CD4-positive, alpha-beta T cell (primary cell): ENCODE measurements at regions of chr17 and their contacts with region 1.

Region 1: GRCh38 chr17:40531051-40531991 is 29.9 kb upstream of the TNS4 start:
- DNase-seq: peak in 13 of 14 experiments; percentile 51 to 84 (median 72)
- ATAC-seq: no peak
- H3K4me3 ChIP-seq: no peak overlapping the region
- H3K4me3 Mint-ChIP-seq: peak overlapping the region; percentile 8
- H3K27ac ChIP-seq: no peak overlapping the region
- H3K27ac Mint-ChIP-seq: peak overlapping the region; percentile 98
- H3K4me1 ChIP-seq: peaks cover 71% of the 10 kb centered on the region
- H3K4me1 Mint-ChIP-seq: peaks cover 72% of the 10 kb centered on the region
- H3K27me3 ChIP-seq: no peaks in the 10 kb centered on the region
- H3K27me3 Mint-ChIP-seq: peaks cover 5% of the 10 kb centered on the region
- CTCF ChIP-seq: no peak

Region 2: DNA sequence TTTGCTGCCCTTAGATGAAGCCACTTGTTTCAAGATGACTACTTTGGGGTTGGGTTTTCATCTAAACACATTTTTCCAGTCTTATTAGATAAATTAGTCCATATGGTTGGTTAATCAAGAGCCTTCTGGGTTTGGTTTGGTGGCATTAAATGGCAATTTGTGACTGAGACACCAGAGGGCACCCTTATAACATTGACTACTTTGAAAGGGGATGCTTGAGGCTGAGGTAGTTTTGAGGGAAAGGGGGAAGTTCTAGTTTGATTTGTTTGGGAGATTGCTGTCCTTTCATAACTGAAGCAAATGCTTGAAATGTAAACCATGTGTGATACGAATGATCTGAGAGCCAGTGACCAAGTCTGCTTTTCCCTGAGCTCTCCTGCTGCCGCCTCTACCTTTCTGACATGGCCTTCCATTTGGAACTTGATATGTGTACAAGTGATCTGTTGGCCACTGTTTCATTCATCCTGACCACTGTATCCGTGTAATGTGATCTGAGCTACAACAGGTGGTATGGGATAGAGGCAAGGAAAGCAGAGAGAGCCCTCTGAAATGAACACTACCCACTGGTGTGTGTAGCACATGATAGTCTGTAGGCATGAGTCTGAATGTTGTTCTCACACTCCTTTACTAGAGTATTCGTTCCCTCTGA is 228.2 kb before region 1 on chr17:
- CTCF ChIA-PET with region 1: interaction called, 4 read pairs
- POLR2A ChIA-PET with region 1: interaction called, 4 read pairs
- intact Hi-C with region 1: loop called in 1 of 2 experiments (anchors 5 kb)
- DNase-seq: peak in 8 of 14 experiments; percentile 46 to 83 (median 61)
- ATAC-seq: peak; percentile 67
- H3K4me3 ChIP-seq: no peak overlapping the region
- H3K4me3 Mint-ChIP-seq: no peak overlapping the region
- H3K27ac ChIP-seq: no peak overlapping the region
- H3K27ac Mint-ChIP-seq: no peak overlapping the region
- H3K4me1 ChIP-seq: peaks cover 33% of the 10 kb centered on the region
- H3K4me1 Mint-ChIP-seq: peaks cover 16% of the 10 kb centered on the region
- H3K27me3 ChIP-seq: no peaks in the 10 kb centered on the region
- H3K27me3 Mint-ChIP-seq: no peaks in the 10 kb centered on the region
- CTCF ChIP-seq: peak; percentile 93

Region 3: GRCh38 chr17:40417609-40418427 is 113.5 kb before region 1 on chr17 and contains the start of gene TOP2A:
- CTCF ChIA-PET with region 1: interaction called, 38 read pairs
- POLR2A ChIA-PET with region 1: interaction called, 36 read pairs
- intact Hi-C with region 1: loop called (anchors 5 kb)
- DNase-seq: peak; percentile 86 to 99 (median 94)
- ATAC-seq: peak; percentile 99
- H3K4me3 ChIP-seq: peak within 1 kb of the TSS; percentile 72
- H3K4me3 Mint-ChIP-seq: peak within 1 kb of the TSS; percentile 87
- H3K27ac ChIP-seq: peak within 1 kb of the TSS in 1 of 2 donors; percentile 29
- H3K27ac Mint-ChIP-seq: peak within 1 kb of the TSS; percentile 74
- H3K4me1 ChIP-seq: peaks cover 32% of the 10 kb centered on the region
- H3K4me1 Mint-ChIP-seq: peaks cover 28% of the 10 kb centered on the region
- H3K27me3 ChIP-seq: peaks cover 0 to 4% of the 10 kb centered on the region in 2 experiments
- H3K27me3 Mint-ChIP-seq: no peaks in the 10 kb centered on the region
- CTCF ChIP-seq: no peak
- total RNA-seq, gene TOP2A: 3.6 to 3.8 TPM

Region 4: GRCh38 chr17:40451420-40451819 is 79.9 kb before region 1 on chr17:
- CTCF ChIA-PET with region 1: no interaction called
- POLR2A ChIA-PET with region 1: interaction called, 11 read pairs
- intact Hi-C with region 1: no loop called
- DNase-seq: no peak
- ATAC-seq: no peak
- H3K4me3 ChIP-seq: no peak overlapping the region
- H3K4me3 Mint-ChIP-seq: no peak overlapping the region
- H3K27ac ChIP-seq: no peak overlapping the region
- H3K27ac Mint-ChIP-seq: no peak overlapping the region
- H3K4me1 ChIP-seq: peaks cover 19% of the 10 kb centered on the region
- H3K4me1 Mint-ChIP-seq: peaks cover 16% of the 10 kb centered on the region
- H3K27me3 ChIP-seq: no peaks in the 10 kb centered on the region
- H3K27me3 Mint-ChIP-seq: no peaks in the 10 kb centered on the region
- CTCF ChIP-seq: no peak

Region 5: DNA sequence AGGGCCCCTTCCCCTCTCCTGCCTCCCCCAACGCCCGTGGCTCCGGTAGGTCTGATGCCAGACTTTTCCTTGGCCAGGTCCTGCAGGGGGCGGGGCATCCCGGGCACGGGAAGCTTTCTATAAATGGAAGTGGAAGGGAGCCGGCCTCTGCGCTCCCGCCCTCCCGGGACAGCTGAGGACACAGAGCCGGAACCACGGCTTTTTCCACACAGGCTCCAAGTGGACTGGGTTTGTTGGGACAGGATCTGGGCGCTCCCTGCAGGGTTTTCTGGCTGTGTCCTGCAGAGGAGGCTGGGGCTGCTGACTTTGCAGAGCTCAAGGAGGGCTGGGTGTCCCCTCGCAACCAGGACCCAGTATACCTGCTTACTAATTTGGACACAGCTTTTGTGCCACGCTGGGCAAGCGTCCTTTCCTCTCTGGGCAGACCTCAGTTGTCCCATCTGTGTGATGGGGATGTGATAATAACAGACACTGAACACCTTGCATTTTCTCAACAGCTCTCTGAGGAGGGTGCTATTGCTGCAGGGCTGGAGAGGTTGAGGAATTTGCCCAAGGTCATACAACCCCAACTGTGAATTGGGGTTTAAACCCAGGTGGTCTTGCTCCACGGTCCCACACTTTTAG is 31.7 kb before region 1 on chr17:
- CTCF ChIA-PET with region 1: no interaction called
- POLR2A ChIA-PET with region 1: no interaction called
- intact Hi-C with region 1: no loop called
- DNase-seq: no peak
- ATAC-seq: no peak
- H3K4me3 ChIP-seq: no peak overlapping the region
- H3K4me3 Mint-ChIP-seq: no peak overlapping the region
- H3K27ac ChIP-seq: no peak overlapping the region
- H3K27ac Mint-ChIP-seq: no peak overlapping the region
- H3K4me1 ChIP-seq: no peaks in the 10 kb centered on the region
- H3K4me1 Mint-ChIP-seq: no peaks in the 10 kb centered on the region
- H3K27me3 ChIP-seq: no peaks in the 10 kb centered on the region
- H3K27me3 Mint-ChIP-seq: no peaks in the 10 kb centered on the region
- CTCF ChIP-seq: no peak

Region 6: DNA sequence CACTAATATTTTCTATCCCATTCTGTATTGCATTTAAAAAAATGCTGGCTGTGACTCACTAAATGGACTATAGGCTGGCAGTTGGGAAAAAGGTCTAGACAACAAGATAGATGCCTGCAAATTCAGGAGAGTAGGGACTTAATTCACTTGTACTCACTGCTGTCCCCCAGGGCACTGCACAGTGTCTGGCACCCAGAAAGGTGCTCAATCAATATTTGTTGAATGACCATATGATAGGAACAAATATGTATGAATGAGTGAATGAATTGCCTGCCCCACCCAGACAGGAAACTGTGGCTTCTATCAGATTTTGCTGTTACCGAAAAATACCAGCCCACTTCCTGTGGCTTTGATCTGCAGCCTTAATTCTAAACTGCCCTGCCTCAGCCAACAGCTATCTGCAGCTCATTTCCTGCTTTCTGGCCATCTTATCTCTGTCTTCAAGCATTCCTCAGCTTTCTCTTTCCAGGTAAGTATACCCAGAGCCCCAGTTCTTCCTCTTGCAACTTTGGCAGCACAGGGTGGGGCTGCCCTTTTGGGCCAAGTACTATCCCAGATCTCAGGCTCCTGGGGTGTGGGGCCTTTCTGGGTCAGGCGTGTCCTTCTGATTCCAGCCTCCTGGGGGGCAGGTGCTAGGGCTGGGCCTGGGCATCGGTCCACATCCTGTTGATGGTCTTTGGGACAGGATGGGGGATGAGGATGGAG is 14.6 kb before region 1 on chr17:
- CTCF ChIA-PET with region 1: interaction called, 16 read pairs
- POLR2A ChIA-PET with region 1: interaction called, 100 read pairs
- intact Hi-C with region 1: loop called in 1 of 2 experiments (anchors 1 kb)
- DNase-seq: peak in 13 of 14 experiments; percentile 40 to 94 (median 64)
- ATAC-seq: peak; percentile 72
- H3K4me3 ChIP-seq: peak overlapping the region; percentile 51
- H3K4me3 Mint-ChIP-seq: peak overlapping the region; percentile 83
- H3K27ac ChIP-seq: no peak overlapping the region
- H3K27ac Mint-ChIP-seq: peak overlapping the region; percentile 86
- H3K4me1 ChIP-seq: peaks cover 79% of the 10 kb centered on the region
- H3K4me1 Mint-ChIP-seq: peaks cover 57% of the 10 kb centered on the region
- H3K27me3 ChIP-seq: no peaks in the 10 kb centered on the region
- H3K27me3 Mint-ChIP-seq: no peaks in the 10 kb centered on the region
- CTCF ChIP-seq: no peak

Region 7: GRCh38 chr17:40598663-40599467 is 67.5 kb after region 1 on chr17:
- CTCF ChIA-PET with region 1: interaction called, 3 read pairs
- POLR2A ChIA-PET with region 1: interaction called, 14 read pairs
- intact Hi-C with region 1: no loop called
- DNase-seq: peak in 13 of 14 experiments; percentile 38 to 94 (median 65)
- ATAC-seq: peak; percentile 47
- H3K4me3 ChIP-seq: peak overlapping the region; percentile 24
- H3K4me3 Mint-ChIP-seq: peak overlapping the region; percentile 71
- H3K27ac ChIP-seq: peak overlapping the region; percentile 95 to 99
- H3K27ac Mint-ChIP-seq: peak overlapping the region; percentile 98
- H3K4me1 ChIP-seq: peaks cover 78% of the 10 kb centered on the region
- H3K4me1 Mint-ChIP-seq: peaks cover 95% of the 10 kb centered on the region
- H3K27me3 ChIP-seq: no peaks in the 10 kb centered on the region
- H3K27me3 Mint-ChIP-seq: no peaks in the 10 kb centered on the region
- CTCF ChIP-seq: no peak